BJ (cell line): ENCODE measurements at regions of chr2 and their contacts with region 1.

Region 1: DNA sequence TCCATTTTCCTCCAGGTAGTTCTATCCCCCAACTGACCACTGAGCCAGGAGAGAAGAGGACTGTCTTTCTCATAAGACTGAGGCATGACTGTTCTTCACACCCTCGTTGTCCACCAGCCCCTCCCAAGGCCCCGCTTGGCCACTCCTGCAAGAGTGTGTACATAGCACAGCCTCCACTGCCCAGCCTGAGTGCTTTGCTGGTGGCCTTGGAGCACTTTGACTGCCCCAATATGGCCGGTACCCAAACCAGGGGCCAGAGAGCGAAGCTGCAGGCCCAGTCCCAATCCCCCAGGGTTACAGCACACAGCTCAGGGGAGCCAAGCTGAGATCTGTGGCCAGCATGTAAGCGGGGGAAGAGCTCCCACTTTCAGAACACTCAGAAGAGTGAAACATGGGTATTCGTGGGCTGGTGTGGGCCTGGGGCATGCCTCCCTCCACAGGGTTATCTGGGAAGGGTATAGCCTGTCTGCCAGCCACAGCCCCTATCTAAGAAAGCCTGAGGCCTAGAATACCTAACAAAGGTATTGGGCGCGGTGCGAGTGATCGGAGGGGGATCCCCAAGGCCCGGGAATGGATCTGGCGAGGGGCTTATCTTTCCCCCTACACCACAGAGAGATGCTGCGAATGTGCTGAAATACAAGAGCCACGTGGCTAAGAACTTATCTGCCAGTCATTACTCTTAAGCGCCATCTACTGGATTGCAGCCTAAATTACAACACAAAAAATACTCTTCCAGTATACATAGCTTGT is 163.8 kb downstream of the WDPCP start:
- DNase-seq: no peak
- H3K4me3 ChIP-seq: no peak overlapping the region
- H3K27me3 ChIP-seq: no peaks in the 10 kb centered on the region
- CTCF ChIP-seq: peak; percentile 48

Region 2: DNA sequence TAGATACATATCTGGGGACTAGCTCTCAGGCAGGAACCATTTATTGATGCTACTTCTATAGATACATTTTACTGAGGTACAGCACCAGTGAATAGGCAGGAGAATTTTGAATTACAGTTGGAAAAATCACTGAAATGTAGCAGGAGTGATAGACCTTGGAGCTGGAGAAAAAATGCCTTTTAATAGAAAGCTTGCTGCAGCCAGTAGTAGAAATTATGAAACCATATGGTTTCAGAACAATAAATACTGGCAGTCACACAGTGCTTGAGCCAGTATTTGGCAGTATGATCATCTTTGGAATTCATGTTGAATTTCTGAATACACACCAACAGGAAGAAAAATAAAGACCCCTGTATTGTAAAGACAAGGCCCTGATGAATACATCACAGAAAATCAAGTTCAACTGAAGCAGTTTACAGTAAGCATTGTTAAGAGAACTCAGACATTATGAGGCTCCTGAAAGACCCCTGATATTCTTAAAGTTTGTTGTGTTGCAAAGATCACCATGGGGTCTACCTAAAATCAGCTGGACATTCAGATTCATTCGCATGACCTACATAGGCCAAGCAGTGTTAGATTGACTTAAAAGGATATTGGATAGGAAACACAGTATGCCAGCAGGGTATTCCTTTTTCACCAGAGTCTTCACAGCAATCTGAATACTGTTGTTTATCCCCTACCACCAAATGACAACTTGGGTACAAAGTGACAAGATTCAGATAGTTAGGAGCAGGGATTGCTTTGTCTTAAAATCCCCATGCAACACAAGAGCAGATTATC is 580.0 kb before region 1 on chr2:
- CTCF ChIA-PET with region 1: no interaction called
- POLR2A ChIA-PET with region 1: no interaction called
- DNase-seq: no peak
- H3K4me3 ChIP-seq: no peak overlapping the region
- H3K27me3 ChIP-seq: no peaks in the 10 kb centered on the region
- CTCF ChIP-seq: no peak

Region 3: DNA sequence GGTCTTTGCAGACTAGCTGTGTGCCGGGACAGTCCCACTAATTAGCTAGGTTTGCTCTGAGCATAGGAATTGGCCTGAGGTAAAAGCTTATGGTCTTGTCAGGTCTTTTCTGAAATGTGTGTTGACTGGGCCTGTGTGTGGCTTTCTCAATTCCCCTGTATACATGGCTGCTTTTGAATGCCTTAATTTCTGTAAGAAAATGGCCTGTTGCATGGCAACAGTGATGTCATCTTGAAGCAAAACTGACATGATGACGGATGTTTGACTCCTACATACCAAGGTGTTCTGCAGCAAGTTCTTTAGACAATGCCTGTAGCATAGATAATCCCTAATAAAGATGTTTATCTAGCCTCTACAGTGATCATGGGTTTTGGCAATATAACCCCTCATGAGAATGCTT is 175.4 kb before region 1 on chr2:
- CTCF ChIA-PET with region 1: no interaction called
- POLR2A ChIA-PET with region 1: no interaction called
- DNase-seq: no peak
- H3K4me3 ChIP-seq: no peak overlapping the region
- H3K27me3 ChIP-seq: no peaks in the 10 kb centered on the region
- CTCF ChIP-seq: no peak

Region 4: DNA sequence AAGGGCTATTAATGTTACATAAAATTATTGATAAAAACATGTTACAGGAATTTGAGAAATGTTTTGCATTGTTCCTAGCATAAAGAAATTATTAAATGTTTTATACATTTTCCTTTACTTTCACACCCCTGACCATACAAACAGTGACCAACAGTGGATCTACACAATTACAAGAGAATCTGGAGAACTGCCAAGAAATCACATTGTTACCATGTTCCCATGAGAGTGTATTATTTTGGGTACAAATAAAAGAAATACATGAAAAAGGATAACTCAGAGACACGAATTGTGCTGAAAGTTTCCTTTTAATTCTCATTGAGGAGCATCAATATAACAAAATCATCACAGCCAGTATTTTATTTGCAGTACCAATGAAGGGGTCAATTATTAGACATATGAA is 13.7 kb after region 1 on chr2:
- CTCF ChIA-PET with region 1: interaction called, 14 read pairs
- POLR2A ChIA-PET with region 1: no interaction called
- DNase-seq: no peak
- H3K4me3 ChIP-seq: no peak overlapping the region
- H3K27me3 ChIP-seq: no peaks in the 10 kb centered on the region
- CTCF ChIP-seq: no peak